CD8-positive, alpha-beta memory T cell (primary cell): ENCODE measurements at regions of chr16 and their contacts with region 1.

Region 1: GRCh38 chr16:10737068-10737625 is 6.5 kb upstream of the NUBP1 start:
- DNase-seq: peak; percentile 47 to 80 (median 70)
- H3K4me3 ChIP-seq: peak overlapping the region; percentile 21
- H3K4me3 Mint-ChIP-seq: peak overlapping the region in 6 of 7 donors; percentile 55 to 81 (median 76)
- H3K27ac ChIP-seq: no peak overlapping the region
- H3K27ac Mint-ChIP-seq: peak overlapping the region; percentile 32 to 92 (median 76)
- H3K4me1 ChIP-seq: peaks cover 10% of the 10 kb centered on the region
- H3K4me1 Mint-ChIP-seq: peaks cover 15 to 34% (median 26%) of the 10 kb centered on the region in 3 donors
- H3K27me3 ChIP-seq: no peaks in the 10 kb centered on the region
- H3K27me3 Mint-ChIP-seq: no peaks in the 10 kb centered on the region

Region 2: DNA sequence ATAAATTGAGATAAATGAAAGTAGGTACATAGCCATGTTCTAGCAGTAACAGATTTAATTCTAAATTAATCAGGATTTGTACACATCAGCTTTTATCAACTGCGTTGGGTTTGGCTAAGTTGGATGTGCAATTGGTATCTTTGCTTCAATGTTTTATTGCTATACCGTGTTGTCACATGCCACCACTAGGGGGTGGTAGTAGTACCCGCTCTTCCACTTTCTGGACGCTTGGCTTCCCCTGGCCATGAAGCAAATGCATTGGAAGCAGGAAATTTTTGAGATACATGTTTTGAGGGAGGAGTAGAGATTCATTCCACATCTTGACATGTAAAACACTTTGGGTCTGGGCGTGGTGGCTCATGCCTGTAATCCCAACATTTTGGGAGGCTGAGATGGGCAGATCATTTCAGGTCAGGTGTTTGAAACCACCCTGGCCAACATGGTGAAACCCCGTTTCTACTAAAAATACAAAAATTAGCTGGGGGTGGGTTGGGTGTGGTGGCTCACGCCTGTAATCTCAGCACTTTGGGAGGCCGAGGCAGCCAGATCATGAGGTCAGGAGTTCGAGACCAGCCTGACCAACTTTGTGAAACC is 215.4 kb before region 1 on chr16:
- CTCF ChIA-PET with region 1: interaction called, 63 read pairs
- POLR2A ChIA-PET with region 1: no interaction called
- DNase-seq: peak in 2 of 5 donors; percentile 10 to 27
- H3K4me3 ChIP-seq: no peak overlapping the region
- H3K4me3 Mint-ChIP-seq: no peak overlapping the region
- H3K27ac ChIP-seq: no peak overlapping the region
- H3K27ac Mint-ChIP-seq: no peak overlapping the region
- H3K4me1 ChIP-seq: no peaks in the 10 kb centered on the region
- H3K4me1 Mint-ChIP-seq: peaks cover 2 to 4% (median 3%) of the 10 kb centered on the region in 3 donors
- H3K27me3 ChIP-seq: peaks cover 3% of the 10 kb centered on the region
- H3K27me3 Mint-ChIP-seq: peaks cover 6 to 13% of the 10 kb centered on the region in 2 donors

Region 3: DNA sequence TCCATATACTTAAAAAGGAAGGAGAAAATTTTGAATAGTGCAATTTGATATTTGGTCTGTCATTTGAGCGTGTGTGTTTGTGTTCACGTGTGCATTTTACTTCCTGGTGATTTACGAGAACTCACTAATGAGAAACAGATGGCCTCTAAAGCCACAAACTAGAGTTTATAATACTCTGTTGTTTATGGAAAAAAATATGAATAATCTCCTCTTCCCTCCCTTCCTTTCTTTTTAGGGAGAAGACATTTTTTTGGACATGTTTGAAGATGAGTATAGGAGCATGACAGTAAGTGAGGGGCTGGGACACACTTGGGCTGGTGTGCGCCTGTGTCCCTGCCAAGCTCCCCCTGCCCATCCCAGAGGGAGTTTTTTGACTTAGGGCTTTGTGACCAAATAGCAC is 309.9 kb after region 1 on chr16:
- CTCF ChIA-PET with region 1: no interaction called
- POLR2A ChIA-PET with region 1: no interaction called
- DNase-seq: no peak
- H3K4me3 ChIP-seq: no peak overlapping the region
- H3K4me3 Mint-ChIP-seq: no peak overlapping the region
- H3K27ac ChIP-seq: no peak overlapping the region
- H3K27ac Mint-ChIP-seq: no peak overlapping the region
- H3K4me1 ChIP-seq: peaks cover 21% of the 10 kb centered on the region
- H3K4me1 Mint-ChIP-seq: peaks cover 15 to 21% (median 19%) of the 10 kb centered on the region in 3 donors
- H3K27me3 ChIP-seq: no peaks in the 10 kb centered on the region
- H3K27me3 Mint-ChIP-seq: no peaks in the 10 kb centered on the region